ENCODE measurements at regions of chr10 and their contacts with region 1.

Region 1: GRCh38 chr10:70404036-70404786 is at the start of gene EIF4EBP2:
- DNase-seq: peak; percentile 99
- H3K4me3 Mint-ChIP-seq: peak within 1 kb of the TSS; percentile 99
- H3K27ac Mint-ChIP-seq: peak within 1 kb of the TSS; percentile 93
- H3K4me1 Mint-ChIP-seq: peaks cover 36% of the 10 kb centered on the region
- H3K27me3 Mint-ChIP-seq: no peaks in the 10 kb centered on the region
- total RNA-seq, gene EIF4EBP2: 52.6 to 53.8 TPM

Region 2: GRCh38 chr10:70233109-70233938 is 170.9 kb before region 1 on chr10 and contains the start of gene PPA1:
- CTCF ChIA-PET with region 1: interaction called, 3 read pairs
- POLR2A ChIA-PET with region 1: interaction called, 21 read pairs
- DNase-seq: peak; percentile 99
- H3K4me3 Mint-ChIP-seq: peak within 1 kb of the TSS; percentile 80
- H3K27ac Mint-ChIP-seq: peak within 1 kb of the TSS; percentile 73
- H3K4me1 Mint-ChIP-seq: peaks cover 42% of the 10 kb centered on the region
- H3K27me3 Mint-ChIP-seq: no peaks in the 10 kb centered on the region
- total RNA-seq, gene PPA1: 155 to 158 TPM

Region 3: GRCh38 chr10:70337201-70337651 is 67.0 kb before region 1 on chr10:
- CTCF ChIA-PET with region 1: no interaction called
- POLR2A ChIA-PET with region 1: no interaction called
- DNase-seq: no peak
- H3K4me3 Mint-ChIP-seq: no peak overlapping the region
- H3K27ac Mint-ChIP-seq: no peak overlapping the region
- H3K4me1 Mint-ChIP-seq: peaks cover 5% of the 10 kb centered on the region
- H3K27me3 Mint-ChIP-seq: no peaks in the 10 kb centered on the region

Region 4: GRCh38 chr10:70381471-70382421 is 22.5 kb before region 1 on chr10:
- CTCF ChIA-PET with region 1: interaction called, 30 read pairs
- POLR2A ChIA-PET with region 1: interaction called, 35 read pairs
- DNase-seq: peak; percentile 51
- H3K4me3 Mint-ChIP-seq: peak overlapping the region; percentile 83
- H3K27ac Mint-ChIP-seq: no peak overlapping the region
- H3K4me1 Mint-ChIP-seq: peaks cover 16% of the 10 kb centered on the region
- H3K27me3 Mint-ChIP-seq: no peaks in the 10 kb centered on the region

Region 5: DNA sequence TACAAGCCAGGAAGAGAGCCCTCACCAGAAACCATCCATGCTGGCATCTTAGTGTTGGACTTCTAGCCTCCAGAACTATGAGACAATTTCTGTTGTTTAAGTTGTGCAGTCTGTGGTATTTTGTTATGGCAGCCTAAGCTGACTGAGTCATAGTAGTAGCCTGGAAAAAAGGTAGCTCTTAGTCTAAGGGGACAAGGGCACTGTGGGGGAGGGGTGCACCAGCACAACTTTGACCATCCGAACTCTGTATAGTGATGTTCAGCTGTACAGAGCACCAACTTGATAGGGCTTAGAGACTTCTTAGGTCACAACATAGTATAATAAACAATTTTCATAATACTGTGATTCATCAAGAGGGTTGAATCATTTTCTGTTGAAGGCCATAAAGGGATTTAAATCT is 14.0 kb after region 1 on chr10:
- CTCF ChIA-PET with region 1: interaction called, 6 read pairs
- POLR2A ChIA-PET with region 1: interaction called, 27 read pairs
- DNase-seq: no peak
- H3K4me3 Mint-ChIP-seq: no peak overlapping the region
- H3K27ac Mint-ChIP-seq: no peak overlapping the region
- H3K4me1 Mint-ChIP-seq: peaks cover 29% of the 10 kb centered on the region
- H3K27me3 Mint-ChIP-seq: no peaks in the 10 kb centered on the region

Region 6: GRCh38 chr10:70430493-70431445 is 26.6 kb after region 1 on chr10:
- CTCF ChIA-PET with region 1: interaction called, 39 read pairs
- POLR2A ChIA-PET with region 1: interaction called, 52 read pairs
- DNase-seq: no peak
- H3K4me3 Mint-ChIP-seq: no peak overlapping the region
- H3K27ac Mint-ChIP-seq: no peak overlapping the region
- H3K4me1 Mint-ChIP-seq: peaks cover 39% of the 10 kb centered on the region
- H3K27me3 Mint-ChIP-seq: no peaks in the 10 kb centered on the region

Region 7: DNA sequence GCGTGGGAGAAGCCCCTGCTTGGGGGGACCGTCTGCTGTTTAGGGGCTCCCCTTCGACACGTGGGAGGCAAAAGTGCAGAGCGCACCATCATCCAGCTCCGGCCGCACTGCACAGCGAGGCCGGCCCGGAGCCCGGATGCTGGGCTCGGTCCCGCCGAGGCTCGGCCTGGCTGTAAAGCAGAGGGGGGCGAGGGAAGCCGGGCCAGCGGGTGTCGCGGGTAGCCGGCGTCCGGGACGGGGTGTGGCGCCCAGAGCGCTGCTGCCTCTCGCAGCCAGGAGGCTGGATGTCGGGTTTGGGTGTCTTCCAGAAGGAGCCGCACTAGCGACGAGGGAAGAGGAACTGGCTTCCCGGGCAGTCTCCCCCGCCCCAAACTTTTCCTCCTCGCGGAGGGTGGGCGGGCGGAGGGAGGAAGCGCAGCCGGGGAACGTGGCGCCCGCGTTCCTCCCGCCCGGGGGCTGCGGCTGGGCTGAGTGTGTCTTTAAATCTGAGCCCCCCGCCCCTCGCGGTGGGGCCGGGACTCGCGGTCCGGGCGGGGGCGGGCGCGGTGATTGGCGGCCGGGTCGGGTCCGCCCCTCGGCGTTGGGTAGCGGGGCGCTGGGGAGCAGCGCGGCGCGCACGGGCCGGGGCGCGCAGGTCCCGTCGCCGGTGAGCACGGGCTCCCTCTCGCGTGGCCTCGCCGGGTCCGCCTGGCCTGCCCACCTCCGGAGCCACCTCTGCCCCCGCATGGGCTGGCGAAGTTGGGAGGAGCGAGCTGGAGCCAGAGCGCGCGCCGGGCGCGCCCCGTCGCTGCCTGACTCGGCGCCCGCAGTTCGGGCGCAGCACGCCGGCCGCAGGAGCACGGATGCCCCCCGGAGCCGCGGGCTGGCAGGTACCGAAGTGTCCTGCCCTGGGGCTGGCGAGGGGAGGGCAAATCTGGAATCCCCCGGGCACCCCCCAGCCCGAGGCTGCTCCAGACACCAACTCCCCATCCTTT is 74.3 kb after region 1 on chr10 and contains the start of gene PALD1:
- CTCF ChIA-PET with region 1: interaction called, 3 read pairs
- POLR2A ChIA-PET with region 1: interaction called, 10 read pairs
- DNase-seq: peak; percentile 32
- H3K4me3 Mint-ChIP-seq: peak within 1 kb of the TSS; percentile 63
- H3K27ac Mint-ChIP-seq: no peak within 1 kb of the TSS
- H3K4me1 Mint-ChIP-seq: peaks cover 32% of the 10 kb centered on the region
- H3K27me3 Mint-ChIP-seq: peaks cover 62% of the 10 kb centered on the region
- total RNA-seq, gene PALD1: 0.08 to 0.15 TPM

Region 8: GRCh38 chr10:70518695-70519094 is 114.5 kb after region 1 on chr10:
- CTCF ChIA-PET with region 1: no interaction called
- POLR2A ChIA-PET with region 1: no interaction called
- DNase-seq: no peak
- H3K4me3 Mint-ChIP-seq: no peak overlapping the region
- H3K27ac Mint-ChIP-seq: no peak overlapping the region
- H3K4me1 Mint-ChIP-seq: peaks cover 2% of the 10 kb centered on the region
- H3K27me3 Mint-ChIP-seq: peaks cover 16% of the 10 kb centered on the region

Measured in activated CD4-positive, alpha-beta memory T cell treated with anti-CD3 and anti-CD28 coated beads, Interleukin-2, amount 10 ng/mL, durations not matched to agents 7 days and 5 days (primary cell).